Posterior cingulate gyrus (tissue), 11 donors: ENCODE measurements at regions of chr11 and their contacts with region 1.

Region 1: GRCh38 chr11:119067371-119068222 is at the start of gene VPS11:
- DNase-seq: peak; percentile 95 to 99 (median 98)

Region 2: GRCh38 chr11:119084663-119085436 is 17.3 kb after region 1 on chr11 and contains the start of gene HMBS:
- intact Hi-C with region 1: loop called (anchors 1 kb)
- DNase-seq: peak; percentile 91 to 100 (median 96)